GM12878 (cell line): ENCODE measurements at regions of chr19 and their contacts with region 1.

Region 1: GRCh38 chr19:14073261-14073924 is 807 bp downstream of the MISP3 start:
- DNase-seq: no peak
- ATAC-seq: peak; percentile 65
- H3K4me3 ChIP-seq: peak overlapping the region; percentile 81
- H3K27ac ChIP-seq: no peak overlapping the region
- H3K4me1 ChIP-seq: peaks cover 19% of the 10 kb centered on the region
- H3K27me3 ChIP-seq: no peaks in the 10 kb centered on the region
- CTCF ChIP-seq: peak; percentile 41 to 70 (median 44); a peak in 5 of 6 replicates
- EP300 ChIP-seq: no peak
- POLR2A ChIP-seq: no peak; the same call in 1 of the 2 replicates
- RAD21 ChIP-seq: 0 out of 2 replicates have a peak, but pooled peaks have one; percentile 13

Region 2: GRCh38 chr19:13277104-13277809 is 796.1 kb before region 1 on chr19:
- CTCF ChIA-PET with region 1: no interaction called
- POLR2A ChIA-PET with region 1: no interaction called
- RAD21 ChIA-PET with region 1: no interaction called
- SMC1A ChIA-PET with region 1: no interaction called
- in situ Hi-C with region 1: loop called (anchors 25 kb)
- intact Hi-C with region 1: no loop called
- DNase-seq: peak; percentile 71
- ATAC-seq: peak; percentile 96
- H3K4me3 ChIP-seq: no peak overlapping the region
- H3K27ac ChIP-seq: 0 out of 2 replicates have a peak overlapping the region, but pooled peaks have one; percentile 24
- H3K4me1 ChIP-seq: peaks cover 11% of the 10 kb centered on the region
- H3K27me3 ChIP-seq: no peaks in the 10 kb centered on the region
- CTCF ChIP-seq: peak; percentile 43 to 79 (median 67); a peak in 5 of 6 replicates
- EP300 ChIP-seq: no peak
- POLR2A ChIP-seq: no peak
- RAD21 ChIP-seq: peak; percentile 82

Region 3: GRCh38 chr19:13880059-13881043 is 193.0 kb before region 1 on chr19:
- CTCF ChIA-PET with region 1: interaction called, 152 read pairs
- POLR2A ChIA-PET with region 1: interaction called, 5 read pairs
- RAD21 ChIA-PET with region 1: interaction called, 40 read pairs
- SMC1A ChIA-PET with region 1: interaction called, 47 read pairs
- in situ Hi-C with region 1: loop called (anchors 5 kb)
- intact Hi-C with region 1: loop called (anchors 1 kb)
- DNase-seq: peak; percentile 84
- ATAC-seq: peak; percentile 95
- H3K4me3 ChIP-seq: peak overlapping the region; percentile 42
- H3K27ac ChIP-seq: peak overlapping the region; percentile 70
- H3K4me1 ChIP-seq: peaks cover 25% of the 10 kb centered on the region
- H3K27me3 ChIP-seq: no peaks in the 10 kb centered on the region
- CTCF ChIP-seq: peak; percentile 100; a peak in 5 of 6 replicates
- EP300 ChIP-seq: no peak
- POLR2A ChIP-seq: 0 out of 2 replicates have a peak, but pooled peaks have one; percentile 41
- RAD21 ChIP-seq: peak; percentile 98

Region 4: GRCh38 chr19:14031719-14032480 is 41.5 kb before region 1 on chr19 and contains the start of gene IL27RA:
- CTCF ChIA-PET with region 1: interaction called, 11 read pairs
- POLR2A ChIA-PET with region 1: interaction called, 3 read pairs
- RAD21 ChIA-PET with region 1: interaction called, 15 read pairs
- SMC1A ChIA-PET with region 1: interaction called, 3 read pairs
- in situ Hi-C with region 1: no loop called
- intact Hi-C with region 1: no loop called
- DNase-seq: peak; percentile 40
- ATAC-seq: peak; percentile 85
- H3K4me3 ChIP-seq: peak within 1 kb of the TSS; percentile 97
- H3K27ac ChIP-seq: peak within 1 kb of the TSS; percentile 91
- H3K4me1 ChIP-seq: peaks cover 17% of the 10 kb centered on the region
- H3K27me3 ChIP-seq: no peaks in the 10 kb centered on the region
- CTCF ChIP-seq: peak; percentile 80 to 92 (median 84)
- EP300 ChIP-seq: 0 out of 4 replicates have a peak, but pooled peaks of 1 of the 2 experiments have one; percentile 9
- POLR2A ChIP-seq: peak; percentile 80
- RAD21 ChIP-seq: peak; percentile 67
- polyA plus RNA-seq, gene IL27RA: 8.4 to 13.1 TPM

Region 5: DNA sequence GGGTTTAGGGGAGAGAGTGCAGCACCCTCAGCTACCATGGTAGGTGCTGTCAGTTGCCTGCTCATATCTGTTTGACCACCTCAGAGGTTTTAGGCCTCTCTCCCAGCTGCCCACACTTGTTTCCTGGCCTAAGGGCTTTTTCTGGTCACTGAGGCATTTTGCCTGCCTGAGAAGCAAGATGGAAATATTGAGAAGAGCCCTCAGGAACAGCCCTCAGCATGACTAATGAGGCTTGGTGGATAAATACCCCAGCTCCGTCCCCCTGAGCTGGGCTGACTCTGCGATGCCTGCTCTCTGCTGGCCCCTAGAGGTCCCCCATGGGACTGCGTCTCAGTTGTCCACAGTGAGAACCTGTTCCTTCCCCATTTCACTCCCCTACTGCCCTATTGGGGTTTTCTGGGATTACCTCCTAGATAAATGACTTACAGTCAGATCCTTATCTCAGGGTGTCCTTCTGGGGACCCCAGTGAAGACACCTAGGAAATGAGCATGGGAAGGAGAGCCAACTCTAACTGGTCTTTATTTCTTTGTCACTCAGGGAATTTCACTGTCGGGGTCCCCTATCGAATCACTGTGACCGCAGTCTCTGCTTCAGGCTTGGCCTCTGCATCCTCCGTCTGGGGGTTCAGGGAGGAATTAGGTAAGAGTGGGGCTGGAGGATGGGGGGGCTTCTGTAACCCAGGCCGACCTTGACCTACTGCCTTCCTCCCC is 24.8 kb before region 1 on chr19:
- CTCF ChIA-PET with region 1: interaction called, 16 read pairs
- POLR2A ChIA-PET with region 1: interaction called, 3 read pairs
- RAD21 ChIA-PET with region 1: interaction called, 6 read pairs
- SMC1A ChIA-PET with region 1: interaction called, 6 read pairs
- in situ Hi-C with region 1: no loop called
- intact Hi-C with region 1: no loop called
- DNase-seq: no peak
- ATAC-seq: peak; percentile 87
- H3K4me3 ChIP-seq: no peak overlapping the region
- H3K27ac ChIP-seq: no peak overlapping the region
- H3K4me1 ChIP-seq: no peaks in the 10 kb centered on the region
- H3K27me3 ChIP-seq: no peaks in the 10 kb centered on the region
- CTCF ChIP-seq: peak; percentile 73 to 95 (median 92)
- EP300 ChIP-seq: no peak
- POLR2A ChIP-seq: no peak
- RAD21 ChIP-seq: peak; percentile 57

Region 6: GRCh38 chr19:14117668-14118164 is 44.3 kb after region 1 on chr19 and contains the start of gene PRKACA:
- CTCF ChIA-PET with region 1: interaction called, 37 read pairs
- POLR2A ChIA-PET with region 1: interaction called, 4 read pairs
- RAD21 ChIA-PET with region 1: interaction called, 9 read pairs
- SMC1A ChIA-PET with region 1: interaction called, 14 read pairs
- in situ Hi-C with region 1: no loop called
- intact Hi-C with region 1: no loop called
- DNase-seq: peak; percentile 91
- ATAC-seq: peak; percentile 99
- H3K4me3 ChIP-seq: peak within 1 kb of the TSS; percentile 70
- H3K27ac ChIP-seq: peak within 1 kb of the TSS; percentile 45
- H3K4me1 ChIP-seq: peaks cover 16% of the 10 kb centered on the region
- H3K27me3 ChIP-seq: no peaks in the 10 kb centered on the region
- CTCF ChIP-seq: no peak
- EP300 ChIP-seq: no peak
- POLR2A ChIP-seq: peak; percentile 54; the same call in 1 of the 2 replicates
- RAD21 ChIP-seq: no peak
- polyA plus RNA-seq, gene PRKACA: 0.53 to 1.3 TPM

Region 7: GRCh38 chr19:14347999-14348889 is 274.9 kb after region 1 on chr19:
- CTCF ChIA-PET with region 1: no interaction called
- POLR2A ChIA-PET with region 1: no interaction called
- RAD21 ChIA-PET with region 1: interaction called, 3 read pairs
- SMC1A ChIA-PET with region 1: no interaction called
- in situ Hi-C with region 1: no loop called
- intact Hi-C with region 1: loop called (anchors 5 kb)
- DNase-seq: no peak
- ATAC-seq: peak; percentile 90
- H3K4me3 ChIP-seq: no peak overlapping the region
- H3K27ac ChIP-seq: no peak overlapping the region; the same call in 1 of the 2 replicates
- H3K4me1 ChIP-seq: peaks cover 9% of the 10 kb centered on the region
- H3K27me3 ChIP-seq: no peaks in the 10 kb centered on the region
- CTCF ChIP-seq: peak; percentile 97 to 99 (median 98)
- EP300 ChIP-seq: no peak
- POLR2A ChIP-seq: no peak
- RAD21 ChIP-seq: peak; percentile 98